ENCODE measurements at regions of chr4 and their contacts with region 1.

Region 1: DNA sequence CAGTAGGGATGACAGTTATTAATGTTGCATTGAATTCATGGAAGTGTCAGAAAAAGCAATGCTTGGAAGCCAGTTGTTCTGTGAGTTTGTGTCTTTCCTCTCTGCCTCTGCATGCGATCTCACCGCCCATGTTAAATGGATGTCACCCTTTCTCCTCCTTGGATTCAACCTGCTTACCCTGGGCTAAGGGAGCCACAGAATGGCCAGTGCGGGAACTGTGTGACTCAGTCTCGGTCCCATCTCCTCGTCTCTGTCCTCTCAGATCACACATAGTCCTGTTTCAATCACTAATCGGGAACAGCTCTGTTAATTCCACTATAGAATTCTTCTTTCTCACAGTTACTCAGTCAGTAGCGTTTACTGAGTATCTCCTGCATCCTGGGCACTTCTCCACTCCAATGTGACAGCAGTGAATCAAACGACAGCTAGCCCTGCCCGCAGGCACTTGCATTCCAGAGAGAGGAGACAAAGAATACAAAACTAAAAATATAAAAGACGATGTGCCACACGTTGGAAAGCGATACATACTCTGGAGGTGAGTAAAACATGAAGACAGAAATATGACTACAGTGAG is 53.7 kb upstream of the TLR3 start:
- DNase-seq: no peak
- ATAC-seq: peak in 3 of 4 donors; percentile 40 to 55 (median 44)
- H3K4me3 ChIP-seq: no peak overlapping the region
- H3K27ac ChIP-seq: no peak overlapping the region
- H3K4me1 ChIP-seq: no peaks in the 10 kb centered on the region
- H3K27me3 ChIP-seq: no peaks in the 10 kb centered on the region
- CTCF ChIP-seq: no peak
- POLR2A ChIP-seq: no peak

Region 2: GRCh38 chr4:185640811-185641675 is 374.3 kb before region 1 on chr4:
- intact Hi-C with region 1: loop called in 1 of 2 experiments (anchors 10 kb)
- DNase-seq: no peak
- ATAC-seq: peak; percentile 67 to 74 (median 68)
- H3K4me3 ChIP-seq: no peak overlapping the region
- H3K27ac ChIP-seq: peak overlapping the region in 2 of 3 donors; percentile 1 to 9
- H3K4me1 ChIP-seq: peaks cover 0 to 7% (median 0%) of the 10 kb centered on the region in 4 donors
- H3K27me3 ChIP-seq: no peaks in the 10 kb centered on the region
- CTCF ChIP-seq: peak; percentile 36 to 55 (median 46)
- POLR2A ChIP-seq: no peak

Region 3: GRCh38 chr4:186074189-186074588 is 58.9 kb after region 1 on chr4:
- intact Hi-C with region 1: no loop called
- DNase-seq: no peak
- ATAC-seq: peak in 3 of 4 donors; percentile 39 to 47 (median 45)
- H3K4me3 ChIP-seq: no peak overlapping the region
- H3K27ac ChIP-seq: no peak overlapping the region
- H3K4me1 ChIP-seq: peaks cover 0 to 6% (median 0%) of the 10 kb centered on the region in 4 donors
- H3K27me3 ChIP-seq: no peaks in the 10 kb centered on the region
- CTCF ChIP-seq: no peak
- POLR2A ChIP-seq: no peak

Region 4: DNA sequence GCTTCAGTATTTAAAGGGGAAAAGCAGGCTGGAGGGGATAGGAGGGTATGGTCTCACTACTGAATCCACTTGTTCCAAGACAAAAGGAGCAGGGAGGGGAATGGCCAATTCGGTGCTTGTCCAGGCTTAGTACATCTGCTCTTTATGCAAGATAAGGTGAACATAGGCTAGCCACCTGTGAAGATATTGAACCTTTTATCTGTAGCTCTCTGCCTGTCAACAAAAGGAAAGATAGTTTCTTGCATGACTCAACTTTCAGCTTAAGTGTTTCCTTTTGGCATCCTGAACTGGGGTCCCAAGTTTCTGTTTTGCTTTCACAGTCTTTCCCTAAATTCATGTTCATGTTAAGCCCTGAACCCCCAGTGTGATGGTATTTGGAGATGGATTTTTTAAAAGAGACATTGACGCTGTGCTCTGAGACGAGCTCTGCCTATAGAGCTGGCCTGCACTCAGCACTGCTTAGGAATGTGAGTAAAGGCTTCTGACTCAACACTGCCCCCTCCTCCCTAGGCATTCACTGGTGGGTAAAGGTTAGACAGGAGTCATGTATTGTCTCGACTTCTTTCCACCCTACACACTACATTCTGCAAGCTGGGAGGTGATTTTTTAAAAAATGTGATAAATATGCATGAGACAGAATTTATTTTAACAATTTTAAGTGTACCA is 117.4 kb after region 1 on chr4:
- intact Hi-C with region 1: no loop called
- DNase-seq: no peak
- ATAC-seq: peak; percentile 25 to 41 (median 34)
- H3K4me3 ChIP-seq: no peak overlapping the region
- H3K27ac ChIP-seq: no peak overlapping the region
- H3K4me1 ChIP-seq: peaks cover 0 to 4% (median 0%) of the 10 kb centered on the region in 4 donors
- H3K27me3 ChIP-seq: no peaks in the 10 kb centered on the region
- CTCF ChIP-seq: peak in 2 of 4 donors; percentile 6 to 10
- POLR2A ChIP-seq: no peak

Measured in right lobe of liver (tissue), 6 donors.